PC-9 (cell line): ENCODE measurements at regions of chr5 and their contacts with region 1.

Region 1: GRCh38 chr5:145965804-145966203 is 29.4 kb downstream of the SH3RF2 start:
- DNase-seq: no peak
- H3K4me3 ChIP-seq: no peak overlapping the region
- H3K27ac ChIP-seq: no peak overlapping the region
- H3K4me1 ChIP-seq: peaks cover 15% of the 10 kb centered on the region
- H3K27me3 ChIP-seq: no peaks in the 10 kb centered on the region
- CTCF ChIP-seq: no peak

Region 2: DNA sequence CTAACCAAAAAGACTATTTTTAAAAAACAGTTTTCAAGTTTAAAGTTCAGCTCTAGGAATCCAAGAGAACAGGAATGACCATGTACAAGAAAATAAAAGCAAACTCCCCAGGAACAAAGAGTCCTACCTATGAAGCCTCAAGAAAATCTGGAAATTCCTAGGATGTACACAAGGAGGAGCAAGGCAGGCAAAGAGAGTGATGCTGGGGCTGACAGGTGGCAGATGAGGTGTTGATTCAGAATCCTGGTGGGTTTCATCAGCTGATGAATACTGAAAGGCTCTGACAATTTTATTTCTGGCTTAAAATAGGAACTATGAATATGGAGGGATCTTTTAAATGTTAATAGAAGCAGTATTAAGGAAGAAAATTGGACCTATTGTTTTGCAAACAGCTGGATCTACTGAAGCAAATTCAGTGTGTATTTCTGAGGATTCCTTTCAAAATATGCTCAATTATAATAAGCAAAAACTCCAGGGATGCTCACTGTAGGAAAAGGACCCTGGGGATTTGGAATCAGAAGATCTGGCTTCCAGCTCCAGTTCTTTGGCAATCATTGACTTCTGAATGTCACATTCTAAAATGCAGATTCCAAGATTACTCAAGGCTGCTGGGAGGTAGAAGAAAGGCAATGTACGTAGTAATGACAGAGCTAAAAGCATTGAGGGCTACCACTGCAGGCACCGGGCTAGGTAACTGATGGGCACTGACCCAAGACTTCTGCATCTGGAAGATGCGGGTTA is 57.4 kb before region 1 on chr5:
- CTCF ChIA-PET with region 1: interaction called, 14 read pairs
- POLR2A ChIA-PET with region 1: no interaction called
- intact Hi-C with region 1: no loop called
- DNase-seq: no peak
- H3K4me3 ChIP-seq: no peak overlapping the region
- H3K27ac ChIP-seq: no peak overlapping the region
- H3K4me1 ChIP-seq: no peaks in the 10 kb centered on the region
- H3K27me3 ChIP-seq: no peaks in the 10 kb centered on the region
- CTCF ChIP-seq: peak; percentile 63

Region 3: DNA sequence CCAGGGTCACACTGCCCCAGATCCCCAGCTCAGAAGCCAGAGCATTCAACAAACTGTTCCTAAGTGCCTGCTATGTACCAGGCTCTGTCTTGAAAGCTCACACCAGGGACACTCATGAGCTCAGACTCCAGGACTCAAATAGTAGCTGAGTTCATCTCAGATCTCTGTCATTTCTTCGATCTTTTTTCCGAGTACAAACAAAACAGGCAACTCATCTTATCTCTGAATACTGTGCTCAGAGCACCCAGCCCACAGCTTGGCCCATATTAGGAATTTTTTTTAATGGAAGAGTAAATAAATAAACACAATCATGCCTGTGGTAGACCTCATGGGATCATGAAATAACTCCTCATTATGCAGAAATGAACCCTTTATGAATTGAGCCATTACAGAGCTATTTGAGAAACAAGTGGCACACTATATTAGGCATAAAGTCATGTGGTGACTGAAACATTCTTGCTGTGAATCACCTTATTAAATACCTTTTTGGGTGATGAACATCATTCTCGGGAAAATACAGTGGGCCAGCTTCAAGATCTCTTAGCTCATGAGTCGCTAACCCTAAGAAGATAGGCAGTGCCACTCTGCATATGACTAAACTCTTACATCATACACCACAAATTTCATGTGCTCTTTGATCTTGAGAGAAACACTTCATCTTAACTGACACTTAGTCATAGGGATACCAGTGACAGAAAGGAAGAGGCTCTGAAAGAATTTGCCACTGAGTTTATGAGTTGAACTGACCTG is 19.5 kb before region 1 on chr5:
- CTCF ChIA-PET with region 1: no interaction called
- POLR2A ChIA-PET with region 1: no interaction called
- intact Hi-C with region 1: loop called (anchors 2 kb)
- DNase-seq: peak in 1 of 2 experiments; percentile 98
- H3K4me3 ChIP-seq: no peak overlapping the region; the same call in 1 of the 2 replicates
- H3K27ac ChIP-seq: peak overlapping the region; percentile 84
- H3K4me1 ChIP-seq: peaks cover 68% of the 10 kb centered on the region
- H3K27me3 ChIP-seq: no peaks in the 10 kb centered on the region
- CTCF ChIP-seq: no peak

Region 4: DNA sequence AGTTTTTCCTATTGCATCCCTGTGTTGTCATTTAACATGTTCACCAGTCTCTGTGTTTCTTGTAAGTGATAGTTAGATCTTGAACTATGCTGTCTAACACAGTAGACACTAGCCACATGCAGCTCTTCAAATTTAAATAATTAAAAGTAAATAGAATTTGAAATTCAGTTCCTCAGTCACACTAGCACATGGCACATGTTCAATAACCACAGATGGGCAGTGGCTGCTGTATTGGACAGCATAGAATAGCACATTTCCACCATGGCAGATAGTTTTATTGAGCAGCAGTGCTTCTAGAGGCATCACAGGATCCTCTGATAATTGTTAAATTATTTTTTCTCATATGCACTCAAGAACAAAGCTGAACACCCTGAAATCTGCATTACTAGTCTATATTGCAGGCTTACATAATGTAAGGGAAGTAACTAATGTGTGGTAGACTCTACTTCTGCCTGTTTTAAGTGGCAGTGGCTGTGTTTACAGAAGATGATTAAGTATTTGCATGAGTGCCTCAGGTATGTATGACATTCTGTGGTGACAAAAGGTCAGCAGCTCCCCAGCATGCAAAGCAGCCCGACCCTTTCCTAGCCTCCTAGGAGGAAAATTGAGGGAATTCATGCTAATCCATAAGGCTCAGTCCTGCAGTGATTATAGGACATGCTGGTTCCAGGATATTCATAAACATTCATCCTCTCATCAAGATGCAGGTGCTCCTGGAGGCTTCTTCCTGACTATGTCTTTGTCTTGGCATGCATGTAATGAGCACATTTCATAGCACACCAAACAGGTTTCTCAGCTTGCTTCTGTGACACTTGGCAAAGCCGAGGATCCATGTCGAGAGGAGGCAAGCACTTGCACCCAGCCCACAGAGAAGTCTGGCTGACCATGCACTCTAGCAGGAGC is 16.0 kb after region 1 on chr5:
- CTCF ChIA-PET with region 1: no interaction called
- POLR2A ChIA-PET with region 1: interaction called, 13 read pairs
- intact Hi-C with region 1: no loop called
- DNase-seq: peak; percentile 70 to 89
- H3K4me3 ChIP-seq: no peak overlapping the region
- H3K27ac ChIP-seq: peak overlapping the region; percentile 57
- H3K4me1 ChIP-seq: peaks cover 48% of the 10 kb centered on the region
- H3K27me3 ChIP-seq: no peaks in the 10 kb centered on the region
- CTCF ChIP-seq: no peak